Naive thymus-derived CD4-positive, alpha-beta T cell (primary cell): ENCODE measurements at regions of chr6 and their contacts with region 1.

Region 1: GRCh38 chr6:31546962-31547726 is at the start of gene NFKBIL1:
- DNase-seq: peak; percentile 53 to 90 (median 84)
- ATAC-seq: peak; percentile 91
- H3K4me3 ChIP-seq: peak within 1 kb of the TSS; percentile 68
- H3K4me3 Mint-ChIP-seq: peak within 1 kb of the TSS; percentile 81 to 97 (median 91)
- H3K27ac ChIP-seq: peak within 1 kb of the TSS; percentile 89
- H3K27ac Mint-ChIP-seq: peak within 1 kb of the TSS; percentile 78 to 98 (median 95)
- H3K4me1 ChIP-seq: peaks cover 22 to 31% of the 10 kb centered on the region in 2 donors
- H3K4me1 Mint-ChIP-seq: peaks cover 22 to 57% (median 48%) of the 10 kb centered on the region in 7 donors
- H3K27me3 ChIP-seq: no peaks in the 10 kb centered on the region
- H3K27me3 Mint-ChIP-seq: no peaks in the 10 kb centered on the region
- total RNA-seq, gene NFKBIL1: 8.7 to 17.2 (median 11.6) TPM

Region 2: GRCh38 chr6:31304683-31305082 is 242.5 kb before region 1 on chr6:
- CTCF ChIA-PET with region 1: no interaction called
- POLR2A ChIA-PET with region 1: no interaction called
- intact Hi-C with region 1: no loop called
- DNase-seq: no peak
- ATAC-seq: no peak
- H3K4me3 ChIP-seq: no peak overlapping the region
- H3K4me3 Mint-ChIP-seq: no peak overlapping the region
- H3K27ac ChIP-seq: no peak overlapping the region
- H3K27ac Mint-ChIP-seq: no peak overlapping the region
- H3K4me1 ChIP-seq: peaks cover 0 to 5% of the 10 kb centered on the region in 2 donors
- H3K4me1 Mint-ChIP-seq: peaks cover 0 to 12% (median 0%) of the 10 kb centered on the region in 7 donors
- H3K27me3 ChIP-seq: no peaks in the 10 kb centered on the region
- H3K27me3 Mint-ChIP-seq: peaks cover 0 to 48% (median 12%) of the 10 kb centered on the region in 5 donors

Region 3: DNA sequence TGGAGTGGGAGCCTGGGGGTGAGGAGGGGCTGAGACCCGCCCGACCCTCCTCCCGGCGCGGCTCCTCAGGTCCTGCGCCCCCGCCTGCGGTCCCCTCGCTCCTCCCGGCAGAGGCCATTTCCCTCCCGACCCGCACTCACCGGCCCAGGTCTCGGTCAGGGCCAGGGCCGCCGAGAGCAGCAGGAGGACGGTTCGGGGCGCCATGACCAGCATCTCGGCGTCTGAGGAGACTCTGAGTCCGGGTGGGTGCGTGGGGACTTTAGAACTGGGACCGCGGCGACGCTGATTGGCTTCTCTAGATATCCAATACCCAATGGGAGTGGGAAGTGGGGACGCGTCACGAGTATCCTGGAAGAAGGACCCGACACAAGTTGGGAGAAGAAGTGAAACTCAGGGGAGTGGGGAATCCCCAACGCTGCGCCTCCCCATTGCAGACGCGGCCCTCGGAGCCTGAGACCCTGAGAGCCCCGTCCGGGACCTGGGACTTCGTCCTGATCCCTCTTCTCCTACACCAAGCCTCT is 190.1 kb before region 1 on chr6 and contains the start of gene HLA-B:
- CTCF ChIA-PET with region 1: no interaction called
- POLR2A ChIA-PET with region 1: no interaction called
- intact Hi-C with region 1: no loop called
- DNase-seq: peak; percentile 65 to 91 (median 82)
- ATAC-seq: peak; percentile 90
- H3K4me3 ChIP-seq: peak within 1 kb of the TSS; percentile 68
- H3K4me3 Mint-ChIP-seq: peak within 1 kb of the TSS; percentile 80 to 100 (median 98)
- H3K27ac ChIP-seq: peak within 1 kb of the TSS; percentile 100
- H3K27ac Mint-ChIP-seq: peak within 1 kb of the TSS; percentile 99 to 100 (median 100)
- H3K4me1 ChIP-seq: peaks cover 28 to 33% of the 10 kb centered on the region in 2 donors
- H3K4me1 Mint-ChIP-seq: peaks cover 49 to 66% (median 58%) of the 10 kb centered on the region in 7 donors
- H3K27me3 ChIP-seq: no peaks in the 10 kb centered on the region
- H3K27me3 Mint-ChIP-seq: peaks cover 0 to 19% (median 0%) of the 10 kb centered on the region in 5 donors
- total RNA-seq, gene HLA-B: 5,136 to 7,364 (median 5,516) TPM

Region 4: DNA sequence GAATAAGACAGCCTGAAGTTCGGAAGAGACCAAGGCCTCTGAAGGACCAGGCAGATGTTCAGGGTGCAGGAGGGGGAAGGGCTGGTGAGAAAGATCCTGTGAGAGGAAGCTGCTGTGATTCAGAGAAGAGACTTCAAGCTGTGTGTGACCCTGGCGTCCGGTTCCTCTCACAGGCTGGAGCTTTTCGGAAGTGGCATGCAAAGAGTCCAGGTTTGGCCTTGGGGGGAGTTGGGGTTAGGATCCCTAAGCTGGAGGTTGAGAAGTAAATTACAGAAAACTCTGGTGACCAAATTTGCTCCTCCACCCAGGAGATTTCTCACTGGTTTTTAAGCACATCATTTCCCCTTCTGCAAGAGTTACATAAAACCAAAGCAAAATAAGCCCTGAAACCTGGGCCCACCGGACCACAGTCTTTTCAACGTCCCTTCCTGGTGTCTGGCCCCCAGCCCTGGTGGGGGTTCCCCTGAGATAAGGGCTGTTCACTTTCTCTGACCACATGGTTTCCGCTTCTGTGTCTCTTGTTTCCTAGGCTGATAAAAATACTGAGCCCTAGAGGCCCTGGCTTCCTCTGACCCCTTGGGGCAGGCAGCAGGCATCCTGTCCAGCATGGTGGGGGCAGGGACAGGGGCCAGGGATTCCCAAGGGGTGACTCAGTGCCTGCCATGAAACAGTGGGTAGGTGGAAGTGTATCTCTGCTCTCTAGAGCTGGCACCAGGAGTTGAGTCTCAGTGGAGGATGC is 13.0 kb after region 1 on chr6:
- CTCF ChIA-PET with region 1: interaction called, 11 read pairs
- POLR2A ChIA-PET with region 1: interaction called, 3,078 read pairs
- intact Hi-C with region 1: no loop called
- DNase-seq: peak in 1 of 9 donors; percentile 34
- ATAC-seq: peak; percentile 79
- H3K4me3 ChIP-seq: peak overlapping the region; percentile 48
- H3K4me3 Mint-ChIP-seq: peak overlapping the region; percentile 66 to 87 (median 82)
- H3K27ac ChIP-seq: peak overlapping the region; percentile 57
- H3K27ac Mint-ChIP-seq: peak overlapping the region; percentile 84 to 92 (median 89)
- H3K4me1 ChIP-seq: peaks cover 42 to 60% of the 10 kb centered on the region in 2 donors
- H3K4me1 Mint-ChIP-seq: peaks cover 55 to 78% (median 65%) of the 10 kb centered on the region in 7 donors
- H3K27me3 ChIP-seq: no peaks in the 10 kb centered on the region
- H3K27me3 Mint-ChIP-seq: peaks cover 0 to 27% (median 0%) of the 10 kb centered on the region in 5 donors

Region 5: DNA sequence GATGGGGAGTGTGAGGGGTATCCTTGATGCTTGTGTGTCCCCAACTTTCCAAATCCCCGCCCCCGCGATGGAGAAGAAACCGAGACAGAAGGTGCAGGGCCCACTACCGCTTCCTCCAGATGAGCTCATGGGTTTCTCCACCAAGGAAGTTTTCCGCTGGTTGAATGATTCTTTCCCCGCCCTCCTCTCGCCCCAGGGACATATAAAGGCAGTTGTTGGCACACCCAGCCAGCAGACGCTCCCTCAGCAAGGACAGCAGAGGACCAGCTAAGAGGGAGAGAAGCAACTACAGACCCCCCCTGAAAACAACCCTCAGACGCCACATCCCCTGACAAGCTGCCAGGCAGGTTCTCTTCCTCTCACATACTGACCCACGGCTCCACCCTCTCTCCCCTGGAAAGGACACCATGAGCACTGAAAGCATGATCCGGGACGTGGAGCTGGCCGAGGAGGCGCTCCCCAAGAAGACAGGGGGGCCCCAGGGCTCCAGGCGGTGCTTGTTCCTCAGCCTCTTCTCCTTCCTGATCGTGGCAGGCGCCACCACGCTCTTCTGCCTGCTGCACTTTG is 28.3 kb after region 1 on chr6 and contains the start of gene TNF:
- CTCF ChIA-PET with region 1: interaction called, 298 read pairs
- POLR2A ChIA-PET with region 1: interaction called, 3,078 read pairs
- intact Hi-C with region 1: loop called (anchors 1 kb)
- DNase-seq: peak in 4 of 9 donors; percentile 37 to 89 (median 59)
- ATAC-seq: peak; percentile 26
- H3K4me3 ChIP-seq: peak within 1 kb of the TSS; percentile 77
- H3K4me3 Mint-ChIP-seq: peak within 1 kb of the TSS; percentile 85 to 99 (median 94)
- H3K27ac ChIP-seq: peak within 1 kb of the TSS; percentile 97
- H3K27ac Mint-ChIP-seq: peak within 1 kb of the TSS; percentile 91 to 99 (median 99)
- H3K4me1 ChIP-seq: peaks cover 62 to 71% of the 10 kb centered on the region in 2 donors
- H3K4me1 Mint-ChIP-seq: peaks cover 54 to 98% (median 90%) of the 10 kb centered on the region in 7 donors
- H3K27me3 ChIP-seq: no peaks in the 10 kb centered on the region
- H3K27me3 Mint-ChIP-seq: peaks cover 0 to 3% (median 0%) of the 10 kb centered on the region in 5 donors
- total RNA-seq, gene TNF: 5.4 to 125 (median 8.7) TPM

Region 6: GRCh38 chr6:31752739-31753319 is 205.7 kb after region 1 on chr6:
- CTCF ChIA-PET with region 1: no interaction called
- POLR2A ChIA-PET with region 1: no interaction called
- intact Hi-C with region 1: no loop called
- DNase-seq: no peak
- ATAC-seq: no peak
- H3K4me3 ChIP-seq: no peak overlapping the region
- H3K4me3 Mint-ChIP-seq: no peak overlapping the region
- H3K27ac ChIP-seq: no peak overlapping the region
- H3K27ac Mint-ChIP-seq: no peak overlapping the region
- H3K4me1 ChIP-seq: no peaks in the 10 kb centered on the region
- H3K4me1 Mint-ChIP-seq: peaks cover 0 to 6% (median 0%) of the 10 kb centered on the region in 7 donors
- H3K27me3 ChIP-seq: no peaks in the 10 kb centered on the region
- H3K27me3 Mint-ChIP-seq: no peaks in the 10 kb centered on the region

Region 7: GRCh38 chr6:31827286-31828079 is 280.3 kb after region 1 on chr6 and contains the start of gene HSPA1B:
- CTCF ChIA-PET with region 1: interaction called, 9 read pairs
- POLR2A ChIA-PET with region 1: interaction called, 8 read pairs
- intact Hi-C with region 1: loop called in 1 of 2 experiments (anchors 1 kb)
- DNase-seq: peak; percentile 55 to 96 (median 82)
- ATAC-seq: peak; percentile 80
- H3K4me3 ChIP-seq: peak within 1 kb of the TSS; percentile 74
- H3K4me3 Mint-ChIP-seq: peak within 1 kb of the TSS; percentile 85 to 97 (median 90)
- H3K27ac ChIP-seq: peak within 1 kb of the TSS; percentile 72
- H3K27ac Mint-ChIP-seq: peak within 1 kb of the TSS; percentile 93 to 99 (median 97)
- H3K4me1 ChIP-seq: peaks cover 12 to 17% of the 10 kb centered on the region in 2 donors
- H3K4me1 Mint-ChIP-seq: peaks cover 11 to 51% (median 46%) of the 10 kb centered on the region in 7 donors
- H3K27me3 ChIP-seq: no peaks in the 10 kb centered on the region
- H3K27me3 Mint-ChIP-seq: no peaks in the 10 kb centered on the region
- total RNA-seq, gene HSPA1B: 8.6 to 68.9 (median 28.9) TPM

Region 8: DNA sequence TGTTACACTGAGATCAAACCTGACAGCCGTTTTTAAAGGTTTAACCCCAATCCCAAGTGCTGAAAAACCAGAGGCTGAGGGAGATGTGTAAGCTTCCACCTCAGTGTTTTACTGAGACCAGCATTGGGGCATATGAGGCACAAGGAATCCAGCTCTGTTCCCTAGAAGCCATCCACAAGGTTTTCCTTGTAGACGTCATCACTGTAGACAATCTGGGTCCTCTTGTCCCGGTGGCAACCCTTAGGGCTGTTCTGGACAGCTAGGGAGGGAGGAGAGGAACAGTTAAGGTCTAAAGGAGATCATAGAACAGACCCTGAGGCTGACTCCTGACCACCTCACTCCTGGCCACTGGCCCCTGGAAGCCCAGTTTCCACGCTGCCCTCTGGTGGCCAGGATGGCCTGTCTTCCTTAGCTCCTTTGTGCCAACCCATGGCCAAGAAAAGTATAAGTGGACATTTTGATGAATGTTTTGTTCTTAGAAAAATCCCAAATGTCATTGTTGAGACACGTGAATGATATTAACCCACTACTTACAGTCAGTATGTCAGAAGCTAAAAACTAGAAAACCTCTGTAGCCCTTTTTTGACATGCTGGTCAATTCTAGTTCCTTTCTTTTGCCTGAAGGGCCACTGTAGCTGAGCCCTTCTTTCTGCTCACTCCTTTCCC is 405.1 kb after region 1 on chr6:
- CTCF ChIA-PET with region 1: no interaction called
- POLR2A ChIA-PET with region 1: no interaction called
- intact Hi-C with region 1: loop called in 1 of 2 experiments (anchors 1 kb)
- DNase-seq: peak in 1 of 9 donors; percentile 53
- ATAC-seq: peak; percentile 67
- H3K4me3 ChIP-seq: no peak overlapping the region
- H3K4me3 Mint-ChIP-seq: no peak overlapping the region
- H3K27ac ChIP-seq: no peak overlapping the region
- H3K27ac Mint-ChIP-seq: peak overlapping the region in 3 of 9 donors; percentile 51 to 61 (median 52)
- H3K4me1 ChIP-seq: no peaks in the 10 kb centered on the region
- H3K4me1 Mint-ChIP-seq: peaks cover 2 to 7% (median 4%) of the 10 kb centered on the region in 7 donors
- H3K27me3 ChIP-seq: no peaks in the 10 kb centered on the region
- H3K27me3 Mint-ChIP-seq: no peaks in the 10 kb centered on the region